Prostate gland (tissue), 2 donors: ENCODE measurements at regions of chr7 and their contacts with region 1.

Region 1: GRCh38 chr7:12490117-12490688 is 80.3 kb upstream of the SCIN start:
- DNase-seq: no peak
- H3K4me3 ChIP-seq: no peak overlapping the region
- H3K27ac ChIP-seq: no peak overlapping the region
- H3K4me1 ChIP-seq: no peaks in the 10 kb centered on the region
- H3K27me3 ChIP-seq: no peaks in the 10 kb centered on the region
- CTCF ChIP-seq: peak; percentile 16 to 63 (median 55)
- POLR2A ChIP-seq: no peak

Region 2: DNA sequence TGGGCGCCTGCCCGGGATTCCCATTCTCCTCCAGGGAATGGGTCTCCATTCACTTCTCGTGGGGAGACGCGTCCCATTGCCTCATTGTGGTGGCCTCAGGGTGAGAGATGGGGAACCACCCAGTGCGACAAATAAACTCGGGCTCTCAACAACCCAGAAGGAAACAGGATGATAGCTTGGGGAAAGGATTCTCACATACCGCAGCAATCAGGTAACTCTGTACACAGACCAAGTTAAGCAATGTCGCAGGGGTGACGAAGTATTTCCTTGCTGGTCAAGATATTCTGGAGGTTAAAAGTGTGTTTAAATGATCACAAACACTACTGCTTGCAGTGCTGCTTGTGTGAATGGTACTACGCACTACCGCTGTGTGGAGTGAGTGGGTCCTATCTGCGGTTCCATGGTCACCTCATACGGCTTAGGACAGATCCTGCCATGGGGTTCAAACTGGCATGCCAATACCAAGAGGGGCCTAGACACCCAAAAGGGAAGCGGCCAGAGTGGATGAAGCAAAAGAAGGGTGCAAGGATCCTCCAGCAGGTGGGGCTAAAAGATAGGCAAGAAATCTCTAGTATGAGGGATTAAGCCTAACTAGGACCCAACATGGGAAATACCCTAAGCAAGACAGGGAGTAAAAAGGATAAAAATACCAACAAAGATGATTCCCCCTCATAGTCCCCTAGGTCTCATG is 422.9 kb before region 1 on chr7:
- intact Hi-C with region 1: loop called (anchors 10 kb)
- DNase-seq: peak; percentile 60
- H3K4me3 ChIP-seq: no peak overlapping the region
- H3K27ac ChIP-seq: no peak overlapping the region
- H3K4me1 ChIP-seq: no peaks in the 10 kb centered on the region
- H3K27me3 ChIP-seq: no peaks in the 10 kb centered on the region
- CTCF ChIP-seq: peak; percentile 22 to 80 (median 67)
- POLR2A ChIP-seq: no peak